ENCODE measurements at regions of chr17 and their contacts with region 1.

Region 1: DNA sequence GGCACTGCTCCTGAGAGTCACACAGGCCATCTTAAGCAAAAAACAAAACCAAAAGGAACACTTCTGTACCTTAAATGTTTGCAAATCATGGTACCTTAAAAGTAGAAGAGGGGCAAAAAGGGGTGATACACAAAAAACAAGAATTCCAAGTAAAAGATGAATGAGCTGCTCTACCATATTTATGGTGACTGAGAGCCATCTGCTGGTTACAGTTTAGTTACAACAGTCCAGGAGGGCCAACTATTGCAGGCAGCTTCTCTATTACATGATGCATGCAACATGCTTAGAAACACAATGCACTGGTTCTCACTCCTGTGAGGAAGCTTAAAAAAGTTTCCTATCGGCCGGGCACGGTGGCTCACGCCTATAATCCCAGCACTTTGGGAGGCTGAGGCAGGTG is 53.5 kb downstream of the STX8 start:
- DNase-seq: no peak
- H3K4me3 ChIP-seq: no peak overlapping the region
- H3K27ac ChIP-seq: no peak overlapping the region
- H3K4me1 ChIP-seq: no peaks in the 10 kb centered on the region
- H3K27me3 ChIP-seq: no peaks in the 10 kb centered on the region
- CTCF ChIP-seq: no peak

Region 2: DNA sequence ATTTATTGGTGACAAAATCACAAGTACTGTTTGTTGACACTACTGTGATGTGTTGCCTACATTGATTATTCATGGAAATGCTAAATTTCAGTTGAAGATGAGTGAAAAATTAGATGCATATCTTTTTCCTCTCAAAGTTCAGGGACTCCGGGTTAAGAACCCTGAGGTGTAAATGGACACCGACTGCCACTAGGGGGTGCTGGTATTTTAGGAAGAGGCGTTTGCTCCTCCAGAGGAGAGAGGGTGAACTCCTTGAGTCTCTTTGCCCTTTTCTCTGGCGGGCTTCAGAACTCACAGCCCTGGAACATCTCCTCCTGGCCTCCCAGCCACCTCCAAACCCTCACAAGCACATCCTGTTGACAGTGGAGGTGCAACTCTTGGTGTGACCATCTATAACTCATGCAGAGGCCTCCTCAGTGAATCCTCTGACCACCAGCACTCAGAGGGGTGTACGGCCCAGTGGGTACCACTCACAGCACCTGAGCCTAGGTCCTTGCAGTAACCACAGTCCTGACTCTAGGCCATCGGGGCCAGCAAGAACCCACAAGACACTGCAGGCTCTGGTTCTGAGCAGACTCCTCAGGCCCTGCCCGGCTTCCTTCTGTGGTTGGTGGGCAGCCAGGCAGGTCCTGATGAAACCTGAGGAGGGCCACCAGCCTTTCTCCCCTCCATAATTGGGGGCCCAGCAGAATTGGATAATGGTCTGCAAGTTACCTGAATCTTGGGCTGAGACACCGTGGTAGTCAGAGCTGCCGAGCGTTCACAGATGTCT is 530.4 kb before region 1 on chr17:
- intact Hi-C with region 1: loop called (anchors 5 kb)
- DNase-seq: peak; percentile 74
- H3K4me3 ChIP-seq: no peak overlapping the region
- H3K27ac ChIP-seq: no peak overlapping the region
- H3K4me1 ChIP-seq: no peaks in the 10 kb centered on the region
- H3K27me3 ChIP-seq: no peaks in the 10 kb centered on the region
- CTCF ChIP-seq: peak; percentile 84

Region 3: DNA sequence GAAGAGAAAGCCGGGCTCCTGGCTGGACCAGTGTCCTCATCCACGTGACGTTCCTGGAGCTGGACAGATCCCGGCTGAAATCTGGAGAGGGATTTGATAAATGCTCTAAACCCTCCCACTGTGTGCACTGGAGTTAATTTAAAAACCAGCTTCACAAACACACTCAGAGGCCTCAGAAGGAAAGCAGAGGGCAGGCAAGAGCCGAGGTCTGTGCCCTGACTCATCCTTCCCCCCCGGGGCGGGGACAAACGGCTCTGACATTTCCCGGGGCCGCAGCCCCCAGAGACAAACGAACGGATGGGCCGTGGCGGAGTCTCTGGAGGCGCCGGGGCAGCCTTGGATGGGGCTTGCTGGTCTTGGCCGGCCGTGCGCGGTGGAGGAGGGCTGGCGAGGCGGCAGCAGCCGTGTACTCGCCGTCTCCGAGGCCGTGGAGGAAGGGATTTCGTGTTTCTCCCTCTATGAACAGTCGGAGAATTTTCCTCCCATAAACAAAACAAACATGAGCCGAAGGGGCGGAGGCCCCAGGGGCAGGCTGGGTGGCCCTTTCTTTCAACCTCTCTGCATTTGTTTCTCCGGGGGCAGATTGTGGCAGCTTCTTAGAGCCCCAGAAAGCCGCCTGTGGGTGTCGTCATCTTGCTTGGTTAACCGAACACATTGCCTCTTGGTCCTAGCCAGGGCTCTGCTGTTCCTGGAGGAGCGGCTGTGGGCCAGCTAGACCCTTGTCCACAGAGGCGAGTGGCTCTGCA is 406.5 kb before region 1 on chr17:
- intact Hi-C with region 1: loop called (anchors 10 kb)
- DNase-seq: peak; percentile 54
- H3K4me3 ChIP-seq: peak overlapping the region; percentile 28
- H3K27ac ChIP-seq: peak overlapping the region; percentile 24
- H3K4me1 ChIP-seq: no peaks in the 10 kb centered on the region
- H3K27me3 ChIP-seq: no peaks in the 10 kb centered on the region
- CTCF ChIP-seq: no peak

Region 4: GRCh38 chr17:9291912-9292560 is 230.0 kb before region 1 on chr17:
- intact Hi-C with region 1: loop called (anchors 10 kb)
- DNase-seq: peak; percentile 51
- H3K4me3 ChIP-seq: no peak overlapping the region
- H3K27ac ChIP-seq: no peak overlapping the region
- H3K4me1 ChIP-seq: no peaks in the 10 kb centered on the region
- H3K27me3 ChIP-seq: no peaks in the 10 kb centered on the region
- CTCF ChIP-seq: peak; percentile 65

Region 5: DNA sequence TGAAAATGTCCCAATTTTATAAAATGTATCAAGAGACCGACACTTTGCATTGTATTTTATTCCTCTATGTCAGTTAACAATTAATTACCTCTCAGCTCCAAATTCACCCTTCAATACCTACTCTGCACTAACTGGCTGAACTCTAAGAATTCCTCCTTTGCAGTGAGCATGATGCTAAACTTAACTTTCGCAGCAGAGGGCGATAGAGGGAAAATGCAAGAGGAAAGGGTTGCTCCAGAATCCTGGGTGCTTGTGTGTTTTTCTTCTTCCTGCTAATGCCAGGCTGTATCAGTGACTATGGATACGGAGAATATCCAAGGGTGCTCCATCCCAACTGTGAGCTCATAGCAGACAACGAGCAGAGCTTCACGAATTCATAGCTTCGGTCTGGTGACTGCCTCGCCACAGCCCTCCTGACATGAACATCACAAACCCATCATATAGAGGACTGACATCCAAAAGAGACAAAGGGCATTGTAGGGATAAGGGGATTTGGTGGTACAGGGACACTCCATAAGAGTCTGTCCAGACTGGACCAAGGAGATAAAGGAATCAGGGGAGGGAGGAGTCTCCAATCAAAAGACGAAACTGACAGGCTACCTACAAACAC is 119.4 kb before region 1 on chr17:
- intact Hi-C with region 1: loop called (anchors 10 kb)
- DNase-seq: peak; percentile 57
- H3K4me3 ChIP-seq: no peak overlapping the region
- H3K27ac ChIP-seq: no peak overlapping the region
- H3K4me1 ChIP-seq: no peaks in the 10 kb centered on the region
- H3K27me3 ChIP-seq: no peaks in the 10 kb centered on the region
- CTCF ChIP-seq: peak; percentile 46

Region 6: GRCh38 chr17:9658593-9659211 is 136.6 kb after region 1 on chr17:
- intact Hi-C with region 1: no loop called
- DNase-seq: peak; percentile 64
- H3K4me3 ChIP-seq: no peak overlapping the region
- H3K27ac ChIP-seq: peak overlapping the region; percentile 29
- H3K4me1 ChIP-seq: no peaks in the 10 kb centered on the region
- H3K27me3 ChIP-seq: no peaks in the 10 kb centered on the region
- CTCF ChIP-seq: no peak

Measured in colonic mucosa (tissue), 4 donors.